ENCODE measurements at regions of chr13 and their contacts with region 1.

Region 1: DNA sequence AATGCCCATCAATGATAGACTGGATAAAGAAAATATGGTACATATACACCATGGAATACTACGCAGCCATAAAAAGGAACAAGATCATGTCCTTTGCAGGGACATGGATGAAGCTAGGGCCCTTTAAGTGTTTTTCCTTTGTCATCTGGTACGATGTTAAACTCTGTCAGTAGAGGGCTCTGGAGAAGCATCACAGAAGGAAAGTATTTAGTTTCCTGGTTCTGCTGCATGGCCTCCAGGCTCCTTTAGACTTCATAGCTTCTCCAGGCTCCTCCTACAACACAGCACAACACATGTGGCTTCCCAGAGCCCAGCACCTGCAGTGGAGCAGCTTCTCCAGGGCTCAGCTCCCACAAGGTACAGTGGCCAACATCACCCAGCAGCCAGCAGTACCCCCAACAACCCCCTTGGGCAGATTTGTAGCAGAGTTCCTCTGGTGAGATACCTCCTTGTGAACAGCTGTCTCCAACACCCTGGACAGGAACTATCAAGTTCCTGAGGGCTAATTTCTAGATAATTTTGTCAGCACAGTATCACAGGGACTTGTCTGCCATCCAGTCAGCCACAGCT is 63.4 kb downstream of the KCTD12 start:
- DNase-seq: peak; percentile 25
- H3K4me3 Mint-ChIP-seq: no peak overlapping the region
- H3K27ac Mint-ChIP-seq: no peak overlapping the region
- H3K4me1 Mint-ChIP-seq: peaks cover 2% of the 10 kb centered on the region
- H3K27me3 Mint-ChIP-seq: peaks cover 9% of the 10 kb centered on the region

Region 2: GRCh38 chr13:76879203-76879882 is 56.6 kb after region 1 on chr13:
- CTCF ChIA-PET with region 1: interaction called, 38 read pairs
- DNase-seq: peak; percentile 73
- H3K4me3 Mint-ChIP-seq: peak overlapping the region; percentile 51
- H3K27ac Mint-ChIP-seq: peak overlapping the region; percentile 95
- H3K4me1 Mint-ChIP-seq: peaks cover 45% of the 10 kb centered on the region
- H3K27me3 Mint-ChIP-seq: peaks cover 3% of the 10 kb centered on the region

Region 3: DNA sequence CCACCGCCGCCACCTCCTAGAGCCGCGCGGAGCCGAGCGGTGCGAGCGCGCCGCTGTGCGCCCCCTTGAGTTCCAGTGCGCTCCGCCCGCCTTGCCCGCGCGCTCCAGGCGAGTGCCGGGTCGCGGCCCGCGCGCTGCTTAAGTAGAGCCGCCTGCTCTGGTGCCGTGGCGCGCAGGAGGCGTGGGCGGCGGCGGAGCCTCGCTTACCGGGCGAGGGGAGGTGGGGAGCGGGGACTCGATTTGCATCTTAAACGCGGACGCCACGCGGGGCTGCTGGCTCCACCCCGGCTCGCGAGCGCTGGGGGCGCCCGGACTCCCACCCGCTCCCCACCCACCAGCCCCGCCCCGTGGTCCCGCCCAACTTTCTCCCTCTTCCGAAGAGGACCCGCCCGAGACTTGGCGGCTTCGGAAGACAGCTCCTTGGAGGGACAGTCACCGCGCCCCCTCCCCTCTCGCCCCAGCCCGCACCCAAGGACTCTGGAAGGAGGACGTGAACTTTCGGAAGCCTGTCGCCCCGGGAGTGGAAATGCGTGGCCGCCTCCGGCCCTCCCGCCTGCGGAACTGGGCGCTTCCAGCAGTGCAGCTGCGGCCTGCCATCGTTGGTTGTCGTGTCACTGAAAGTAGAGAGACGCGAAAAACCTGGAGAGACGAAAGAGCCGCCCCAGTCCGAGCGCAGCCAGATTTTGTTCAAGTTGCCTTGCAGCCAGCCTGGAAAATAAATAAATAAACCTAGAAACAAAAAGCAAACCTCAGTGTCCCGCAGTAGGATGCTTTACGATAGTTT is 63.7 kb after region 1 on chr13 and contains the start of gene KCTD12:
- CTCF ChIA-PET with region 1: interaction called, 38 read pairs
- DNase-seq: peak; percentile 83
- H3K4me3 Mint-ChIP-seq: peak within 1 kb of the TSS; percentile 88
- H3K27ac Mint-ChIP-seq: peak within 1 kb of the TSS; percentile 88
- H3K4me1 Mint-ChIP-seq: peaks cover 40% of the 10 kb centered on the region
- H3K27me3 Mint-ChIP-seq: peaks cover 38% of the 10 kb centered on the region

Region 4: DNA sequence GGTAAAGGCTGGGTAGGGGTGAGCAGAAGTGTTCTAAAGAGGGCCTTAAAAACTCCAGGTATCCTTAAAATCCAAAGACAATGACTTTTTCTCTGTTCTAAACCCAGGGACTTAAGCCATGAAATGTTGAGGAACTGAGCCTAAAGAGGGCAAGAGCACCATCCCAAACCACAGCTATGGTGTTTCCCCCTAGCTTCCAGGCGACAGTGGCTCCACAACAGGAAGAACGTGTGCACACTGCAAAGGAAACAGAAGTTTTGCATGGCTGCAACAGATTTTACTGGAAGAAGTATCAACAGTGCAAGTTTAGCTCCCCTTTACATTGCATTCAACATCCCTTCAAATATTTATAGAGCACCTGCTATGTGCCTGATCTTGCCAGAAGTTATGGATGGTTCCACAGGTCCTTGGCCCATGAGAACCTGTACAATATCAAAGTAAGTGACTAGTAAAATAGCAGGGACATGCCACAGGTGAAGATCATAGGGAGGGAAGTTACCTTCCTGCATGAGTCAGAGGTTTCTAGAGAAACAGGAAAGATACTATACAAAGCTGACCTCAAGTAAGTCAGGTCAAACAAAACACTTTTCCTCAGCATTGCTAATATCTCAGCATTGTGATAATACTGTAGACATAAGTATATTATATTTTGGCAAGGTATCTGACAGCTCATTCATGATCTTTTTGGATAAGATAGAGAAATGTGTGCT is 71.8 kb after region 1 on chr13:
- CTCF ChIA-PET with region 1: interaction called, 19 read pairs
- DNase-seq: no peak
- H3K4me3 Mint-ChIP-seq: no peak overlapping the region
- H3K27ac Mint-ChIP-seq: no peak overlapping the region
- H3K4me1 Mint-ChIP-seq: peaks cover 15% of the 10 kb centered on the region
- H3K27me3 Mint-ChIP-seq: peaks cover 22% of the 10 kb centered on the region

Region 5: GRCh38 chr13:76903544-76904162 is 80.9 kb after region 1 on chr13:
- CTCF ChIA-PET with region 1: interaction called, 42 read pairs
- DNase-seq: peak; percentile 82
- H3K4me3 Mint-ChIP-seq: no peak overlapping the region
- H3K27ac Mint-ChIP-seq: no peak overlapping the region
- H3K4me1 Mint-ChIP-seq: no peaks in the 10 kb centered on the region
- H3K27me3 Mint-ChIP-seq: peaks cover 20% of the 10 kb centered on the region